Calu3 (cell line): ENCODE measurements at regions of chr12 and their contacts with region 1.

Region 1: GRCh38 chr12:14264778-14265177 is 100.7 kb upstream of the ATF7IP start:
- DNase-seq: no peak
- H3K4me3 Mint-ChIP-seq: no peak overlapping the region
- H3K27ac Mint-ChIP-seq: no peak overlapping the region
- H3K4me1 Mint-ChIP-seq: peaks cover 47% of the 10 kb centered on the region
- H3K27me3 Mint-ChIP-seq: no peaks in the 10 kb centered on the region
- CTCF ChIP-seq: no peak

Region 2: DNA sequence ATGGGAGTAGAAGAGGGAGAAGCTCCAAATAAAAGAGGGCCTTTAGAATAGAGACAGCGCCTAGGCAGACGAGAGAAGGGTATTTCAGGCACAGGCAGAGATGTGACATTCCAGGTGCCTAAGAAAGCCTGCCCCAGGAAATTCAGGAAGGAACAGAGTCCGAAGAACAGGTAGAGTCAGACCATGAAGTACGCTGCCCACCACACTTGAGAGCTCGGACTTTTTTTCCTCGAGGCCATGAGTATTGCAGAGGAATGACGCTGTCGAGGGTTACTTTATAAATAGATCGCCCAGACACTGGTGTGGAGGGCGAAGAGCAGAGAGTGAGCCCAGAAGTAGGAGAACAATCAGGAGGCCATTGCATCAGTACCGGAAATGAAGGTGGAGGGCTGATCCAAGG is 70.1 kb before region 1 on chr12:
- CTCF ChIA-PET with region 1: interaction called, 11 read pairs
- intact Hi-C with region 1: no loop called
- DNase-seq: no peak
- H3K4me3 Mint-ChIP-seq: no peak overlapping the region
- H3K27ac Mint-ChIP-seq: no peak overlapping the region
- H3K4me1 Mint-ChIP-seq: no peaks in the 10 kb centered on the region
- H3K27me3 Mint-ChIP-seq: no peaks in the 10 kb centered on the region
- CTCF ChIP-seq: no peak

Region 3: DNA sequence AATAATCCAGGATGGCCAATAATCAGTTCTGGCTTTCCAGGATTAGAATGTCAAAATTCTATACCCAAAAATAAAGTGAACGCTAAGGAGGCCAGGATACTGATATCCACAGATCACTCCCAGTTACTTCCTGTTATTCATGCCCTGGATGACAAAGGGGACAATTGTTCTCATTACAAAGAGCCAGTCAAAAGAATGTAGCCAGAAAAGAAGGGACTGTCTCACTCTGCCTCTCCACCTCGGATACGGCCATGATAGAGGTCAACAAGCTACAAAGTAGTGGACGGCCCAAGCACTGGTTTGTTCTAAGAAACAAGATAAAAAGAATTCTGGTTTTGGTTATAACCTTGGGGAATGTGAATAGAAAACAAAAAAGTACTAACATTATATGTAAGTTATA is 15.4 kb before region 1 on chr12:
- CTCF ChIA-PET with region 1: no interaction called
- intact Hi-C with region 1: no loop called
- DNase-seq: peak; percentile 39
- H3K4me3 Mint-ChIP-seq: no peak overlapping the region
- H3K27ac Mint-ChIP-seq: peak overlapping the region; percentile 87
- H3K4me1 Mint-ChIP-seq: peaks cover 17% of the 10 kb centered on the region
- H3K27me3 Mint-ChIP-seq: no peaks in the 10 kb centered on the region
- CTCF ChIP-seq: no peak

Region 4: DNA sequence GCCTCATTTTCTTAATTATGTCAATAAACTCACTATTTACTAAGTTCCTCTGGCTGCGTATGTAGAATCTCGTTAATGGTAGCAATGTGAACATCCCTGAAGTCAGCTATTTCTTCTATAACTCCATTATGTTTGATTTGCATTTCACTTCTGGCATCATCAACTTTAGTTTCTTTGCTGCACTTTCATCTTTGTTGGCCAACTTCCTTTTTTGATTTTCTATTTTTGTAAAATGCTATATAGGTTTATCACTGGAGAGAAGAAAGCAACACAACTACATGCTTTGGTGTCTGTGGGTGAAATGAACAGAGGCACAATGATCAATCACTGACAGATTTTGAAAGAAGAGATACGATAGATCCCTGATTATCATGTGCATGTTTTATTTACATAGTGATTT is 42.2 kb after region 1 on chr12:
- CTCF ChIA-PET with region 1: no interaction called
- intact Hi-C with region 1: loop called (anchors 1 kb)
- DNase-seq: no peak
- H3K4me3 Mint-ChIP-seq: no peak overlapping the region
- H3K27ac Mint-ChIP-seq: peak overlapping the region; percentile 43
- H3K4me1 Mint-ChIP-seq: peaks cover 12% of the 10 kb centered on the region
- H3K27me3 Mint-ChIP-seq: no peaks in the 10 kb centered on the region
- CTCF ChIP-seq: no peak

Region 5: DNA sequence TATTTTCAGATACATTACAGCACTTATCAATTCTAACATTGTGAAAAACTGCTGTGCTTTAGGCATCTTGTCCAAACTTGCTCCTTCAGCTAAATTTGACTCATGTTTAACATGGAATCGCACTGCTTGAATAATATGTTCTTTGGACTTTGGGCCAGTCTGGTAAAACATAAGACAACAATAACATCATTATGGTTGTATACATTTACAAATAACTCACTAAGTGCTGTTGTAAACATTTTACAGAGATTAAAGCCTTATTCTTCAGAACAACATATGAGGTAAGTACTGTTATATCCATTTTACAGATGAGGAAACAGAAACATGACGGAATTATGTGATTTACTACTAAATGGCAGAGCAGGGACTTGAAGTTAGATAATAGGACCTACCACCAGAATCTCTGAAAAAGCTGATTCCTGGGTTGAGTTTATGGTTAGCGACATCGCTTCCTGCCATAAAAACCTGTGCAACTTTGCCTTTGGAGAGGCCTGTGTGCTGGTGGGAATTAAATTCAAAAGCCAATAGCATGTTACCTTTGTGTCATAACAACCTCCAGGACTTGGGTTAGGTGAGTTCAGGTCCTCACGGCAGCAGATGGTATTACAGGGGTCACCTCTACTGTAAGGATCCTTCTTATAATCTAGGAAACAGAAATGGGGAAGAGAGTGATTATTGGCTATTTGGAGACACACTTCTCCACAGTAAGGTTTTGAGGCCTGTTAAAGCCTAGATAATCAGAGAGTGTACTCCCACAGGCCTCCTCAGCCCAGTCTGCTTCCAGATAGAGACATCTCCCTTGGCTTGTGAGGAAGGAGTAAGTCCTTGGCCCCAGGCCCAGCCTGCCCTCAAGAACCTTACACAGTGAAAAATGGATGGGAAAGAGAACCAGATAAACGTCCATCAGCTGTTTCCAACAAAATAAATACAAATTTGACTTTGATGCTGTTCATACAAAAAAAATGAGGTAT is 241.1 kb after region 1 on chr12:
- CTCF ChIA-PET with region 1: no interaction called
- intact Hi-C with region 1: no loop called
- DNase-seq: no peak
- H3K4me3 Mint-ChIP-seq: no peak overlapping the region
- H3K27ac Mint-ChIP-seq: no peak overlapping the region
- H3K4me1 Mint-ChIP-seq: no peaks in the 10 kb centered on the region
- H3K27me3 Mint-ChIP-seq: no peaks in the 10 kb centered on the region
- CTCF ChIP-seq: no peak